Activated T-helper 2 cell treated with anti-CD3 and anti-CD28 coated beads, Interferon-gamma antibody, Interleukin-2, Interleukin-4, amounts not matched to agents 10 μg/mL and 5 μg/mL and 100 μg/mL, durations not matched to agents 14 hours and 24 hours and 36 hours (primary cell): ENCODE measurements at regions of chr4 and their contacts with region 1.

Region 1: GRCh38 chr4:86924811-86925210 is 10.0 kb upstream of the AFF1 start:
- DNase-seq: no peak
- H3K4me3 Mint-ChIP-seq: no peak overlapping the region
- H3K27ac Mint-ChIP-seq: no peak overlapping the region
- H3K4me1 Mint-ChIP-seq: peaks cover 19% of the 10 kb centered on the region
- H3K27me3 Mint-ChIP-seq: no peaks in the 10 kb centered on the region

Region 2: DNA sequence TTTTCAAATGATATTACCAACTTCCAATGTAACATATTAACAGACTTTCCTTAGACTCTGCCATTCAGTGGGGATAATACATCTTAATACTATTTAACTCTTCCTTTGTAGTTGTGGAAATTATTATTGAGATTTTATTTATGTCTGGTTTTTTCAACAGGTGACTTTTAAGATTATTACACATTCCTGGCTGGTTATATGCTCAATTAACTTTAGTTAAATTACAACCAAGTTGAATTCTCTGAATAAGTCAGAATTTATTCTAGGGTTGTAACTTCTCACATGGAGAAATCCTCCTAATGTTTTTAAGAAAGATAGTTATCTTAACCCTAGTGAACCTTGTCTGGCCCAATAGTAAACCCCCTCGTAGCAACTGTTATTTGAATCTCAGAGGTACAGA is 183.0 kb before region 1 on chr4:
- intact Hi-C with region 1: no loop called
- DNase-seq: no peak
- H3K4me3 Mint-ChIP-seq: no peak overlapping the region
- H3K27ac Mint-ChIP-seq: no peak overlapping the region
- H3K4me1 Mint-ChIP-seq: no peaks in the 10 kb centered on the region
- H3K27me3 Mint-ChIP-seq: no peaks in the 10 kb centered on the region

Region 3: DNA sequence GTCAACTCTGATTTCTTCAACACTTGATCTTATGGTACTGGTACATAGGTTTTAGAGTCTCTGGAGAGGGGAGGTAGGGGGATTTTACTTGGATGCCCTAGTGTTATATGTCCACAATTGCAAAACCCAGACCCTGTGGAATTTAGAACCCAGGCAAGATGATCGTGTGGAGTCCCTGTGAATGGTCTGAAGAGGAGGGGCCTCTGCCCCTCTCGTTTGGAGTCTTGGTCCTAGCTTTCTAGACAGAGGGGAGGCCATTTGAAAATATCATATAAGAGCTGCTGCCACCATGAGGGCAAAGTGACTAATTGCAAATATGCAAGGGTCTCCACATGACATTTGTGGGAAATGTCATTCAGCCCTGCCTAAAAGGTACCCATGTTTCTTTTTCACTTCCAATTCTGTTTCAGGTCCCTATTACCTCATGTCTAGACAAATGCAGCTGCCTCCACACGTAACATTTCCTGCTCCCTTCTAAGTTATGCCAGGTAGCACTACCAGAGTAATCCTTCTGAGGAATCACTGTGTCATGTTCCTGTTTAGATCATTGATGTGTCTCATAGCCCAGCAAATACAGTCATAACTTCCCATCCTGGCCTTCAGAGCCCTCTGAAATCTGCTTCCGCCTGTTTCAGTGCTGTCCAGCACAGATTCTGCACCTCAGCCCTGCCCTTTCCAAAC is 168.8 kb after region 1 on chr4:
- intact Hi-C with region 1: loop called (anchors 1 kb)
- DNase-seq: no peak
- H3K4me3 Mint-ChIP-seq: no peak overlapping the region
- H3K27ac Mint-ChIP-seq: peak overlapping the region; percentile 24
- H3K4me1 Mint-ChIP-seq: peaks cover 22% of the 10 kb centered on the region
- H3K27me3 Mint-ChIP-seq: no peaks in the 10 kb centered on the region

Region 4: GRCh38 chr4:87150498-87151261 is 225.9 kb after region 1 on chr4:
- intact Hi-C with region 1: loop called (anchors 5 kb)
- DNase-seq: peak; percentile 15
- H3K4me3 Mint-ChIP-seq: no peak overlapping the region
- H3K27ac Mint-ChIP-seq: no peak overlapping the region
- H3K4me1 Mint-ChIP-seq: peaks cover 3% of the 10 kb centered on the region
- H3K27me3 Mint-ChIP-seq: no peaks in the 10 kb centered on the region